OCI-LY7 (cell line): ENCODE measurements at regions of chr4 and their contacts with region 1.

Region 1: DNA sequence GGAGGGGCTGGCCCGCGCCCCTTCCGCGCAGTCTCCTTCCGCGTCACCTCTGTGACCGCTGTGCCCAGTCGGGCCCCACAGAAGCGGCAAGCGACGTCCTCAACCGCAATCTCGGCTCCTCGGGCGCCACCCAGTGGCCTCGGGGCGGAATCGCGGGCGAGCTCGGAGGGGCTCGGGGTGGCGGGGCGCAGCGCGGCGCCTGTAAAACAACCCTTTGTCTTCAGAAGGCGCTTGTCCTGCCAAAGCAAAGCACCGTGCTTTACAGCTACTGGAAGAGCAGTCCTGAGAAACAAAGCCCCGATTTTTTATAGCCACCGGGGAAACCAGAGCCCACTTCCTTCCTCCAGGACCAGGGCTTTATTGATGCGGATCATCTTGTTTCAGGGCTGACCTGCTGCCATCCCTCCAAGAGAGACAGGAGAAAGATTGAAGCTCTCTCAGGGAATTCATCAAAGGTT is 37.3 kb upstream of the CDKN2AIP start:
- DNase-seq: peak; percentile 83
- H3K4me3 ChIP-seq: peak overlapping the region; percentile 59
- H3K27ac ChIP-seq: no peak overlapping the region
- H3K4me1 ChIP-seq: peaks cover 14% of the 10 kb centered on the region
- CTCF ChIP-seq: peak; percentile 89

Region 2: DNA sequence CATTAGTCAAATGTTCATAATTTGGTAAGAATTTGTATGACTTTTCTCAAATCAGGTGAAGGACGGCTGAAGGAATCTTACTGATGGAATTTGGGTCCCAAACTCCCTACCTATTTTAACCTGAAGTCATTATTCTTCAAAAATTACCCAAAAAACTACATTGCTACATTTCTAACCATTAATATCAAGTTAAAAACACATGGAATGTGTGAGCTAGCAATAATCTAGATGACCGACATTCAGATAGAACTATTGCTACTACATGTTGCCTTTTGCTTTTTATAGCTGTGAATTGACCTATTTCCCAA is 333.4 kb before region 1 on chr4:
- CTCF ChIA-PET with region 1: no interaction called
- POLR2A ChIA-PET with region 1: no interaction called
- intact Hi-C with region 1: loop called (anchors 2 kb)
- DNase-seq: no peak
- H3K4me3 ChIP-seq: no peak overlapping the region
- H3K27ac ChIP-seq: no peak overlapping the region
- H3K4me1 ChIP-seq: no peaks in the 10 kb centered on the region
- CTCF ChIP-seq: peak; percentile 51; the same call in 1 of the 2 replicates